ENCODE measurements at regions of chr5 and their contacts with region 1.

Region 1: DNA sequence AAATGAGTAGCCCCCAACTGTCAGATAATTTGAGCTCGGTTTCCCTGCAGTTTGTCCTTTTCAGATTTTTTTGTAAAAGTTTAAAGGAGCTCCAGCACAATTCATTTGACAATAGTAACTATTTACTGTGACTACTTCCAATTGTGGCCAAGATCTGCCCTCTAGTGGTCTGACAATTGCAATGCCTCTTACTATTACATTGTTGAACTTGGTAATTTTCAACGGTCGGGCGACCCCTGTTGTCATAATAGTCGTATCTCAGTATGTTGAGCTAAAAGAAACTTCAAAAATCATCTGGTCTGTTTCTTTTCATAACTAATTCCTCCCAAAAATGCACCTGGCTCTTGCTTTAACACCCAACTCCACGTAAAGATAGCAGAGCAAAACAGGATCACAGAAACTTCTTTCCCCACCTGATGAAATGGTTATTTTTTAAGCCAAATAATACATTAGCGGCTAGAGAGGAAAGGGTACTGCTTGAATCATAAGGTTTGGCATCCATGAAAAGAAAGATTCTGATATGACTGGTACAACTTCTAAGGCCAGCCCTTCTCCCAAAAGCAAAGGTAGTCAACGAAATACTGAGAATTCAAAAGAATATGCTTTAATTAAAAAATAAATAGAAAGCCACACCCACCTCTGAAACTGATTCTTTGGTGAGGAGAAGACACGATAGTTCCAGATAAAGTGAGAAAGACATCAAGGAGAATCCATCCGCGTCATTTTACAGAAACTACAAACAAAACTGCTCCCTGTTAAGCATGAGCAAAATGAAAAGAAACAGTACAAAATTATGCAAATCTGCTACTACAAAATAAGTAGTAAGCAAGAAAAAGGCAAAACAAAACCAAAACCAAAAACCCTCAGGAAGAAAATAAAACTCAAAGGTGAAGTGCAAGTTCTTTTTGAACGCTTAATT is 76.9 kb upstream of the HTR4 start:
- DNase-seq: peak; percentile 85
- ATAC-seq: peak; percentile 98
- H3K4me3 Mint-ChIP-seq: peak overlapping the region; percentile 53
- H3K27ac Mint-ChIP-seq: peak overlapping the region; percentile 47
- H3K4me1 Mint-ChIP-seq: peaks cover 2% of the 10 kb centered on the region
- H3K27me3 Mint-ChIP-seq: peaks cover 14% of the 10 kb centered on the region

Region 2: DNA sequence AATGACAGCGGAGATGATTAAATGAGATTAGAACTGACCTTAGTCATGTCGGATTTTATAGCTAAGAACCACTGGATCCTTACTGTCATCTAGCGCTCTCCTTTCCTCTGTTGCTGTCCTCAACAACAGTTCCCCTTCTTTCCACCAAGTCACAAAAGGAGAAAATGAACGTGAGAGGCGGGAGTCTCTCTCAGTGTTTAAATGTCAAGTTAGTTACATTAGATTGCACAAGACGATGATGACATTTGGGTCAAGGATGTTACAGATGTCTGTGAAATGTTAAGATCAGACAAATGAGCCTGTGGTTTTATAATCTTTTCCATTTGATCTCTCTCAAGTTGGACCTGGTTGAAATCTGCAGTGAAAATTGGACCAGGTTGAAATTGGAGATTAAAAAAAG is 294.0 kb before region 1 on chr5:
- CTCF ChIA-PET with region 1: interaction called, 204 read pairs
- POLR2A ChIA-PET with region 1: no interaction called
- DNase-seq: no peak
- ATAC-seq: no peak
- H3K4me3 Mint-ChIP-seq: no peak overlapping the region
- H3K27ac Mint-ChIP-seq: no peak overlapping the region
- H3K4me1 Mint-ChIP-seq: no peaks in the 10 kb centered on the region
- H3K27me3 Mint-ChIP-seq: no peaks in the 10 kb centered on the region

Region 3: DNA sequence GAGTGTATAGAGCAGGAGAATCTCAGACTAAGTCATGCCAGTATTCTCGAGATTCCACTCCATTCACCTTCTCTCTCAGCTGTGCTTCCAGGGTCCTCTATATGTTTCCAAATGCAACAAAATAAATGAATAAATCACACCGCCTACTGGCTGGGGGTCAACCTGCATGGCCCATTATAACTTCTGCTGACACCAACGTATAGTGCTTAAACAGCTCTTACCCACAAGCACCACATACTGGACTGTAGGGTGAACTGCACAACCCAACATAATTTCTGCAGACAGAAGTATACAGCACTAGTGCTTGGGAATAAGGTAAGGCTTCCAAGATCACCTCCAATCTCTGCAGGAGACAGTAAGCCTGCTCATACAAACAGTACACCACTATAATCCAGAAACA is 43.8 kb before region 1 on chr5:
- CTCF ChIA-PET with region 1: interaction called, 10 read pairs
- POLR2A ChIA-PET with region 1: no interaction called
- DNase-seq: peak; percentile 21
- ATAC-seq: peak; percentile 51
- H3K4me3 Mint-ChIP-seq: no peak overlapping the region
- H3K27ac Mint-ChIP-seq: no peak overlapping the region
- H3K4me1 Mint-ChIP-seq: no peaks in the 10 kb centered on the region
- H3K27me3 Mint-ChIP-seq: no peaks in the 10 kb centered on the region

Region 4: DNA sequence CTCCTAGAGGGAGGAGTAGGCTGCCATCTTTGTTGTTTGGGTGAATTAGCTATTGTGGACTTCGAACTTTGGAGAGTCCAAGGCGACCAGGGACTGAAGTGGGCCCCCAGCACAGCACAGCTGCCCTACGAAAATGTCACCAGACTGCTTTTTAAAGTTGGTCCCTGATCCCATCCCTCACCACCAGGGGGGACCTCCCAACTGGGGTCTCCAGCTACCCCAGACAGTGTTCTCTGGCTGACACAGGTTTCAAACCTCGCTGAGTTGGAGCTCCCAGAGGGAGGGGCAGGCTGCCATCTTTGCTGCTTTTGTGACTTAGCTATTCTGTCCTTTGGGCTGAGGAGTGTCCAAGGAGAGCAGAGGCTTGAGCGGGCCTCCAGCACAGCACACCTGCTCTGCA is 49.5 kb after region 1 on chr5:
- CTCF ChIA-PET with region 1: no interaction called
- POLR2A ChIA-PET with region 1: no interaction called
- DNase-seq: no peak
- ATAC-seq: no peak
- H3K4me3 Mint-ChIP-seq: no peak overlapping the region
- H3K27ac Mint-ChIP-seq: no peak overlapping the region
- H3K4me1 Mint-ChIP-seq: no peaks in the 10 kb centered on the region
- H3K27me3 Mint-ChIP-seq: peaks cover 17% of the 10 kb centered on the region

Region 5: DNA sequence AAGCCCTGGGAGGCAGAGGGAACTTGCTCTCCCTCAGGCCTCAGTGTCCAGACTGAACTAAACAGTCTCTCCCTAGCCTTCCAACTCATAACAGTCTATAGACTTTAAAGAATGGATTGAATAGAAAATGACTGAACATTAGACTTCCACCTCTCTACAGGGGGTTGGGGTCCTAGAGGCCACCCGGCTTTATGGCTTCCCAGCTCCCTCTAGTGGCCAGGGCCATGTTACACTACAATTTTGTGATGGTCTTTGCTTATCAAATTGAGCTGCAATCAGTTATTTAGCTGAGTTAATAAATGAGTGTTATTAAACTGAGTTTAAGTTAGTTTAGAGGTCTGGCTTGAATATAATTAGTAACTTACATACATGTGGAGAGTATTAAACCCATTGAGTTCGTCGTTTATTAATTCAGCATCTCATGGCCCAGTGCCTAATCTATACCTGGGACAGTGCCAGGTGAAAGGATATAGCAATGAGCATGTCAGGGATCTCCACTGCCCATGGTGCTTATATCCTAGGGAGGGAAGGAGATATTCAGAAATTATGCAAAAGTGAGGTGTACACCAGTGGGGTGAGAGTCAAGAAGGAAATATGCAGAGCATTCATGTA is 226.5 kb after region 1 on chr5:
- CTCF ChIA-PET with region 1: interaction called, 88 read pairs
- POLR2A ChIA-PET with region 1: no interaction called
- DNase-seq: peak; percentile 62
- ATAC-seq: peak; percentile 61
- H3K4me3 Mint-ChIP-seq: no peak overlapping the region
- H3K27ac Mint-ChIP-seq: no peak overlapping the region
- H3K4me1 Mint-ChIP-seq: no peaks in the 10 kb centered on the region
- H3K27me3 Mint-ChIP-seq: peaks cover 21% of the 10 kb centered on the region

Region 6: DNA sequence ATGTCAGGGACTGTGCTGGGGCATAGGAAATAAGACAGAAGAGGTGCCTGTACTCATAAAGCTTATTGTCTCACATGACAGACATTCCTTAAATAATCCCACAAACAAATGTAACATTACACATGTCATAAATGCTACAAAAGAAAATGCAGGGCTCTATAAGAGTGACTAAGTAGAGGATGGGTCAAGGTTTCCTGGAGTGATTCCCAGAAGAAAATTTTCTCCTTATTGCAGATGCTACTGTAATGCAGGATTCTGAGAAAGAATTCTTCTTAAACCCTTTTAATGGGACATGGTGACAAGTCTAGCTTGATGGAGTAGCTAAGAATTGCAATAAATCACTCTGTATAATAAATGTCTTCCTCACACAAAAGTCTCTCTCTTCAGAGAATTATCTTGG is 276.0 kb after region 1 on chr5:
- CTCF ChIA-PET with region 1: interaction called, 19 read pairs
- POLR2A ChIA-PET with region 1: no interaction called
- DNase-seq: no peak
- ATAC-seq: no peak
- H3K4me3 Mint-ChIP-seq: no peak overlapping the region
- H3K27ac Mint-ChIP-seq: no peak overlapping the region
- H3K4me1 Mint-ChIP-seq: no peaks in the 10 kb centered on the region
- H3K27me3 Mint-ChIP-seq: peaks cover 14% of the 10 kb centered on the region